CD14-positive monocyte (primary cell): ENCODE measurements at regions of chr5 and their contacts with region 1.

Region 1: DNA sequence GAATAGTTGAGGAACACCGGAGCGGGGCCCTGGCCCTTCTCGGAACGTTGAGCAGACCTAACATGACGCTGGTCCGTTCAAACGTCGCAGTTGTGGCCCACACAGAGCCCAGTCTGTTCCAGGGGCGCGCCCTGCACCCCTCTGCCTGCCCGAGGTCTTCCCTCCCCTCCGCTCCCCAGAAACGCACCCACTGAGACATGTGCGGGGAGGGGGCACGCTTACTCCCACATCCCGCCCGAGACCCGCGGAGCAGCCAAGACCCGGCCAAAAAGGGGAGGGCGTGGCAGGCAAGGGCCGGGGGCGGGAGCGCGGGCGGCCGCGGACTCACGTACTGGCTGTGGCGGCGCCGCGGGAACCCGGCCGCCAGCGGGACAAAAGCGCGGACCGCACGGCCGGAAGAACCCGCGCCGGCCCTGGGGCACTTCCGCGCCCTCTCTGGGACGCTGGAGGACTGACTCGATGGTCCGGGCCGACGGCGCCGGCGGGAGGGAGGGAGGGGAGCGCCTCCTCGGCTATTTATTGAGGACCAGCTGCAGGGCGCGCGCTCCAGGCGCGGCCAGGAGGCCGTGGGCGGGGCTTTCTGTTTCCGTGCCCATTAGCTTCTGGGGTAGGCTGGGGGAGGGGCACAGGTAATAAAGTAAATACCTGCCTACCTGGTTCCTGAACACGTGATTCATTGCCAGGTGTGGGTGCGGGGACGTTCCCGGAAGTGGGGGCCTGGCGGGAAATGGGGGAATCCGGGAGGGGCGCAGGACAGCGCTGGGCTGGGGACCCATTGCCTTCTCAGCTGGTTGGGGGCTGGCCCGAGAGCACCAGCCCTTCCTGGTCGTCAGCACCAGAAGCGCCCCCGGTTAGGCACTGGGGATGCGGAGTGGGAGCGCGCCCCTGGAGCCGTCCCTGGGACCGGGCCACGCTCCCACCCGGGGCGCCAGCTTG is at the start of gene ZFP62:
- DNase-seq: peak; percentile 87 to 90 (median 88)
- H3K4me3 ChIP-seq: peak within 1 kb of the TSS; percentile 74 to 97 (median 85)
- H3K4me3 Mint-ChIP-seq: peak within 1 kb of the TSS; percentile 90 to 93
- H3K27ac ChIP-seq: peak within 1 kb of the TSS; percentile 75 to 92
- H3K27ac Mint-ChIP-seq: peak within 1 kb of the TSS; percentile 83 to 94 (median 90)
- H3K4me1 ChIP-seq: peaks cover 12 to 13% of the 10 kb centered on the region in 2 donors
- H3K4me1 Mint-ChIP-seq: peaks cover 11% of the 10 kb centered on the region
- H3K27me3 ChIP-seq: peaks cover 0 to 4% of the 10 kb centered on the region in 2 donors
- H3K27me3 Mint-ChIP-seq: peaks cover 0 to 6% (median under 1%) of the 10 kb centered on the region in 3 donors
- CTCF ChIP-seq: peak; percentile 42
- polyA plus RNA-seq, gene ZFP62: 4.1 to 7.1 (median 6.5) TPM

Region 2: DNA sequence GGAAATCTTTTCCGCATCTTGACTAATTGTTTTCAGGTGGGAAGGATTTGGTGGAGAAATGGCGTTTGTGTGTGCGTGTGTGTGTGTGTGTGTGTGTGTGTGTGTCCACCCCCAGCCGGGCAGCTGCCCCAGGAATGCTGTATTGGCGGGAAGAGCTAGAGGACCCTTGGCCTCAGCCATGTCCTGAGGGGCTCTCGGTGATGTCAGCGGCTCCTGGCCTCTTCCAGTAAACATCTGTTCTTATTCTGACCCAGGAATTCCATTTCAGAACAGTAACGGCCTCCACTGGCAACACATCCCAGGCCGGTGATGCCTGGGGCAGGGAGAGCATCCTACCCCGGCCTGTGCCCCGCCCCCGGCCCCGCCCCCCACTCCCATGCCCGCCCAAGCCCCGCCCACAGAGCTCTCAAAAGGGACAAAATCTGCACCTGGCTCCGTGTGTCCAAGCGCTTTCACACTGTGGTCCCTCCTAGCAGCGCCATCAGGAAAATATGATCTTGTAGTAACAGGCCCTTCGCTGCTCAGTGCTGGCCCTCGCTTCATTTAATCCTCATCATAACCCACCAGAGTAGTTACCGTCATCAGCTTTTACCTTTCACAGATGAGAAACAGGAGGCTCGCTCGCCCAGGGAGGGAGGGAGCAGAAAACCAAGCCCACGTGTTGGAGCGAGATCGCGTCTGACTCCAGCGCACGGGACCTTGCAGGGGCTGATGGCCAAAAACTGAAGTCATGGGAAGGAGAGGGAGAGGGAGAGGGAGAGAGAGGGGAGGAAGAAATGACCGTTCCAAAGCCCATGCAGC is 1534.8 kb before region 1 on chr5:
- intact Hi-C with region 1: no loop called
- DNase-seq: no peak
- H3K4me3 ChIP-seq: no peak overlapping the region
- H3K4me3 Mint-ChIP-seq: no peak overlapping the region
- H3K27ac ChIP-seq: no peak overlapping the region
- H3K27ac Mint-ChIP-seq: no peak overlapping the region
- H3K4me1 ChIP-seq: no peaks in the 10 kb centered on the region
- H3K4me1 Mint-ChIP-seq: no peaks in the 10 kb centered on the region
- H3K27me3 ChIP-seq: no peaks in the 10 kb centered on the region
- H3K27me3 Mint-ChIP-seq: peaks cover 4 to 17% (median 6%) of the 10 kb centered on the region in 3 donors
- CTCF ChIP-seq: no peak

Region 3: GRCh38 chr5:180802325-180803180 is 58.6 kb before region 1 on chr5 and contains the start of gene MGAT1:
- intact Hi-C with region 1: loop called (anchors 2 kb)
- DNase-seq: peak; percentile 82 to 87 (median 82)
- H3K4me3 ChIP-seq: peak within 1 kb of the TSS; percentile 97 to 98 (median 98)
- H3K4me3 Mint-ChIP-seq: peak within 1 kb of the TSS; percentile 95 to 97
- H3K27ac ChIP-seq: peak within 1 kb of the TSS; percentile 97 to 98
- H3K27ac Mint-ChIP-seq: peak within 1 kb of the TSS; percentile 94 to 98 (median 97)
- H3K4me1 ChIP-seq: peaks cover 82 to 88% of the 10 kb centered on the region in 2 donors
- H3K4me1 Mint-ChIP-seq: peaks cover 82% of the 10 kb centered on the region
- H3K27me3 ChIP-seq: no peaks in the 10 kb centered on the region
- H3K27me3 Mint-ChIP-seq: no peaks in the 10 kb centered on the region
- CTCF ChIP-seq: no peak
- polyA plus RNA-seq, gene MGAT1: 231 to 523 (median 385) TPM

Region 4: GRCh38 chr5:180825768-180826525 is 35.2 kb before region 1 on chr5:
- intact Hi-C with region 1: loop called in 1 of 2 experiments (anchors 5 kb)
- DNase-seq: peak; percentile 53 to 70 (median 64)
- H3K4me3 ChIP-seq: no peak overlapping the region
- H3K4me3 Mint-ChIP-seq: no peak overlapping the region
- H3K27ac ChIP-seq: peak overlapping the region in 1 of 2 donors; percentile 39
- H3K27ac Mint-ChIP-seq: peak overlapping the region; percentile 56 to 85 (median 68)
- H3K4me1 ChIP-seq: peaks cover 47 to 52% of the 10 kb centered on the region in 2 donors
- H3K4me1 Mint-ChIP-seq: peaks cover 60% of the 10 kb centered on the region
- H3K27me3 ChIP-seq: no peaks in the 10 kb centered on the region
- H3K27me3 Mint-ChIP-seq: peaks cover 0 to 2% (median 0%) of the 10 kb centered on the region in 3 donors
- CTCF ChIP-seq: no peak

Region 5: DNA sequence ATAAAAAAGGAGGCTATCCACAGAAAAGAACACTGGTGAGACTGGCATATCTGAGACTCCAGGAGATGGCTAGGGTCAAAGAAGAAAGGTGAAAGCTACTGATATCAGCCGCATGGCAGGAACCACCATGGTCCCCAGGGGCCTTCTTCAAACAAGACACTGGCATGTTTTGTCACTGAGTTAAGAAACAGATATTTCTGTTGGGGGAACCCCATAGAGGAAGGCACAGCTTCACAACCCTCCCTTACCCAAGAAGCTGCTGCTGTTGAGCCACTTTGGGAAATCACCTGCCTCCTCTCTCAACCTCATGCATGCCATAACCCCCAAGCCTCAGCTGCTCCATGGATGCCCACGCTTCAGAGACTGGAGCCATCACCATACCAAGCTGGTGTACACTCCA is 114.2 kb after region 1 on chr5:
- intact Hi-C with region 1: no loop called
- DNase-seq: no peak
- H3K4me3 ChIP-seq: no peak overlapping the region
- H3K4me3 Mint-ChIP-seq: no peak overlapping the region
- H3K27ac ChIP-seq: no peak overlapping the region
- H3K27ac Mint-ChIP-seq: no peak overlapping the region
- H3K4me1 ChIP-seq: no peaks in the 10 kb centered on the region
- H3K4me1 Mint-ChIP-seq: no peaks in the 10 kb centered on the region
- H3K27me3 ChIP-seq: no peaks in the 10 kb centered on the region
- H3K27me3 Mint-ChIP-seq: peaks cover 0 to 5% (median 2%) of the 10 kb centered on the region in 3 donors
- CTCF ChIP-seq: no peak

Region 6: GRCh38 chr5:181159286-181159829 is 298.2 kb after region 1 on chr5:
- intact Hi-C with region 1: loop called (anchors 10 kb)
- DNase-seq: peak; percentile 61 to 74 (median 70)
- H3K4me3 ChIP-seq: no peak overlapping the region
- H3K4me3 Mint-ChIP-seq: peak overlapping the region in 1 of 2 donors; percentile 20
- H3K27ac ChIP-seq: no peak overlapping the region
- H3K27ac Mint-ChIP-seq: peak overlapping the region in 6 of 7 donors; percentile 31 to 89 (median 56)
- H3K4me1 ChIP-seq: peaks cover 10 to 11% of the 10 kb centered on the region in 2 donors
- H3K4me1 Mint-ChIP-seq: peaks cover 21% of the 10 kb centered on the region
- H3K27me3 ChIP-seq: peaks cover 1 to 15% of the 10 kb centered on the region in 2 donors
- H3K27me3 Mint-ChIP-seq: peaks cover 16 to 24% (median 24%) of the 10 kb centered on the region in 3 donors
- CTCF ChIP-seq: peak; percentile 91